Panc1 (cell line): ENCODE measurements at regions of chr10 and their contacts with region 1.

Region 1: GRCh38 chr10:16663444-16663843 is 141.8 kb upstream of the C1QL3 start:
- DNase-seq: no peak
- ATAC-seq: no peak
- H3K4me3 ChIP-seq: no peak overlapping the region
- H3K27ac ChIP-seq: no peak overlapping the region
- H3K4me1 ChIP-seq: no peaks in the 10 kb centered on the region
- H3K27me3 ChIP-seq: no peaks in the 10 kb centered on the region
- CTCF ChIP-seq: no peak

Region 2: DNA sequence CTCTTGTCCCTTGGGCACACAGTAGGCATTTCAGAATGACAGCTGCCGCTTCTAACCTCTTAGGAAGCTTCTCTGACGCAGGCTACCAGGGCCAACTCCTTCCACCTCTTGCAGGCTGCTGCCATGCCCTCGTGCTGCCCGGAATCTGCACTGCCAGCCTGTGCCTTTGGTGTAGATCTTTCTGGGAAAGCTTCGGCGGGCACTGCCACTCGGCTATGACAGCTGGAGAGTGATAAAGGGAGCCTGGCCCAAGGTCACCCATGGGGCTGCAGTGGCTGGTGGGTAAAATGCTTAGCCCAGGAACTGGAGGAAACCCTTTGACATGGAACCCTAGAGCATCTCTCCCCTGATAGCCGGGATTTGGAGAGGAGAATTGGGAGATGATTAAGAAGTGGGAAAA is 63.8 kb before region 1 on chr10:
- CTCF ChIA-PET with region 1: no interaction called
- POLR2A ChIA-PET with region 1: interaction called, 13 read pairs
- in situ Hi-C with region 1: no loop called
- intact Hi-C with region 1: no loop called
- DNase-seq: no peak
- ATAC-seq: no peak
- H3K4me3 ChIP-seq: no peak overlapping the region
- H3K27ac ChIP-seq: no peak overlapping the region
- H3K4me1 ChIP-seq: no peaks in the 10 kb centered on the region
- H3K27me3 ChIP-seq: no peaks in the 10 kb centered on the region
- CTCF ChIP-seq: no peak